Ascending aorta (tissue), 2 donors: ENCODE measurements at regions of chr3 and their contacts with region 1.

Region 1: GRCh38 chr3:195154793-195155535 is 116.0 kb downstream of the XXYLT1 start:
- DNase-seq: peak; percentile 21 to 83
- H3K4me3 ChIP-seq: no peak overlapping the region
- H3K27ac ChIP-seq: peak overlapping the region; percentile 45 to 57
- H3K4me1 ChIP-seq: peaks cover 4 to 16% of the 10 kb centered on the region in 2 donors
- H3K27me3 ChIP-seq: no peaks in the 10 kb centered on the region
- CTCF ChIP-seq: no peak

Region 2: GRCh38 chr3:195210266-195210973 is 55.5 kb after region 1 on chr3:
- intact Hi-C with region 1: loop called (anchors 2 kb)
- DNase-seq: no peak
- H3K4me3 ChIP-seq: peak overlapping the region in 1 of 2 donors; percentile 21
- H3K27ac ChIP-seq: peak overlapping the region; percentile 87
- H3K4me1 ChIP-seq: peaks cover 10 to 23% of the 10 kb centered on the region in 2 donors
- H3K27me3 ChIP-seq: no peaks in the 10 kb centered on the region
- CTCF ChIP-seq: no peak

Region 3: DNA sequence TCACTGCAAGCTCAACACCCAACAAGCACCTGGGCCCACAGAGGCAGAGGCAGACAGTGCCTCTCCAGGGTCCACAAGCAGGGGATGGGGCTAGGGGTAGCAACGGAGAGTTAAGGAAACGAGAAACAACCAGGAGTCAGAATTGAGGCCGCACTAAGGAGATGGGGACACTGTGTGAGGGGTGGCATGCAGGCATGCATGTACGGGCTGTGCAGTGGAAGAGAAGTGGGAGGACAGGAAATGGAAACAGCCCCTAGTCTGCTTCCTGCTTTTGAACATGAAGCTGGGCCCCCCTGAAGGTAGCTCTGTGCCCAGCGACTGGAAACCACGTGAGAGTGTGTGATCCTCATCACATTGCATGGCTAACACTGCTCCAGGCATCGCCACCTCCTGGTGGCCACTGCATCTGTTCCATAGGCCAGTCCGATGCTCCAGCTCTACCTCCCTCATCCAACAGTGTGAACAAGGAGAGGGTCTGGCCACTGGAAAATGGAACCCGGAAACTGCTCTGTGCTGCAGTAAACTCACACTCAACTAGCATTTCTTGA is 72.0 kb after region 1 on chr3:
- intact Hi-C with region 1: loop called (anchors 1 kb)
- DNase-seq: no peak
- H3K4me3 ChIP-seq: no peak overlapping the region
- H3K27ac ChIP-seq: no peak overlapping the region
- H3K4me1 ChIP-seq: peaks cover 15 to 24% of the 10 kb centered on the region in 2 donors
- H3K27me3 ChIP-seq: no peaks in the 10 kb centered on the region
- CTCF ChIP-seq: no peak

Region 4: DNA sequence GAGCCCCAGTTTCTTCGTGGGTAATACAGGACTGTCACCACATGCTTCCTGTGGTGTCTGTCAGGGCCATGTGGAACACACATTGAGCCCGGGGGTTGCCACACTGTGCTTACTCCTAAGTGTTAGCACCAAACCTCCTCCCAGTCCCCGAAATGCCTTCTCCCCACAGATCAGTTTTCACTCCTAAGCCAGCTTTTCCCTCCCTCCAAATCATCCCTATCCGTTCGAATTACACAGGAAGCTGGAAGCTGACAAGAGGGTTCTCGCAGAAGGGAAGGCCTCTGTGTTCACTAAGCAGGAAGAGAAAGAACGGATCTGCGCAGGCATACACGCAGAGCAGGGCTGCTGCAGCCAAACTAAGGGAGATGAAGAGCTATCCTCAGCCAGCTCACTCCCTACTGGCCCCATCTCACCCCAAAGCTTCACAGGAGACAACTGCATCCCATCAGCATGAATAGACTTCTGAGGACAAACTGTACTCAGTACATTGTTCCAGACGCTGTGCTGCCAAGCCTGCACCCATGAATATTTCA is 83.7 kb after region 1 on chr3:
- intact Hi-C with region 1: loop called (anchors 5 kb)
- DNase-seq: no peak
- H3K4me3 ChIP-seq: no peak overlapping the region
- H3K27ac ChIP-seq: no peak overlapping the region
- H3K4me1 ChIP-seq: peaks cover 0 to 12% of the 10 kb centered on the region in 2 donors
- H3K27me3 ChIP-seq: no peaks in the 10 kb centered on the region
- CTCF ChIP-seq: no peak